GM12878 (cell line): ENCODE measurements at regions of chr14 and their contacts with region 1.

Region 1: DNA sequence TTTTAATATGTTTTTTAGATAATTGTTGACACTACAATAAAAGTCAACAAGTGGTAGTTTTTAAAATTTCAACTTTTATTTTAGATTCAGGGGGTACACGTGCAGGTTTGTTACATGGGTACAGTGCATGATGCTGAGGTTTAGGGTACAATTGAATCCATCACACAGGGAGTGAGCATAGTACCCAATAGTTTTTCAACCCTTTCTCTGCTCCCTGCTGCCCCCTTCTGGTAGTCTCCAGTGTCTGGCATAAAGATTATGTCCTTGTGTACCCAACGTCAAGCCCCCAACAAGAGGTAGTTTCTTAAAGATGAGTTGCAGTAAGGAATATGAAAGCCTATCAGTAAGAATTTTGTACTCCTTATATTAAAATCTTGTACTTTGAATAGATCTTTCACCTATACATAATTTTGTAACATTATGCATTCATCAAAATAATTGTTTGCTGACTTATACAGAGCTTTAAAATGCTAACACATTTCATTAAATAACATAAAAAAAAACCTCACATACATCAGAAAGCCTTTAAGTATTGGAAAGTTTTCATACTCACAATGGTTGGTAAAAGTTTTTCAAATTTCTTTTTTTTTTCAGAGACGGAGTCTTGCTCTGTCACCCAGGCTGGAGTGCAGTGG is 5.4 kb upstream of the RALGAPA1 start:
- DNase-seq: no peak
- ATAC-seq: peak; percentile 96
- H3K4me3 ChIP-seq: no peak overlapping the region
- H3K27ac ChIP-seq: no peak overlapping the region
- H3K4me1 ChIP-seq: no peaks in the 10 kb centered on the region
- H3K27me3 ChIP-seq: no peaks in the 10 kb centered on the region
- CTCF ChIP-seq: peak; percentile 62 to 87 (median 73)
- EP300 ChIP-seq: no peak
- POLR2A ChIP-seq: no peak
- RAD21 ChIP-seq: peak; percentile 58

Region 2: GRCh38 chr14:35423621-35424020 is 390.9 kb before region 1 on chr14:
- CTCF ChIA-PET with region 1: interaction called, 6 read pairs
- POLR2A ChIA-PET with region 1: no interaction called
- RAD21 ChIA-PET with region 1: no interaction called
- SMC1A ChIA-PET with region 1: interaction called, 3 read pairs
- in situ Hi-C with region 1: no loop called
- intact Hi-C with region 1: loop called (anchors 2 kb)
- DNase-seq: no peak
- ATAC-seq: no peak
- H3K4me3 ChIP-seq: no peak overlapping the region
- H3K27ac ChIP-seq: no peak overlapping the region
- H3K4me1 ChIP-seq: no peaks in the 10 kb centered on the region
- H3K27me3 ChIP-seq: no peaks in the 10 kb centered on the region
- CTCF ChIP-seq: no peak
- EP300 ChIP-seq: no peak
- POLR2A ChIP-seq: no peak
- RAD21 ChIP-seq: no peak

Region 3: GRCh38 chr14:35438910-35439713 is 375.4 kb before region 1 on chr14:
- CTCF ChIA-PET with region 1: interaction called, 11 read pairs
- POLR2A ChIA-PET with region 1: no interaction called
- RAD21 ChIA-PET with region 1: interaction called, 7 read pairs
- SMC1A ChIA-PET with region 1: interaction called, 7 read pairs
- in situ Hi-C with region 1: no loop called
- intact Hi-C with region 1: no loop called
- DNase-seq: peak; percentile 39
- ATAC-seq: peak; percentile 76
- H3K4me3 ChIP-seq: no peak overlapping the region
- H3K27ac ChIP-seq: no peak overlapping the region
- H3K4me1 ChIP-seq: no peaks in the 10 kb centered on the region
- H3K27me3 ChIP-seq: no peaks in the 10 kb centered on the region
- CTCF ChIP-seq: peak; percentile 45 to 62 (median 54); a peak in 5 of 6 replicates
- EP300 ChIP-seq: no peak; a peak in 1 of 4 replicates
- POLR2A ChIP-seq: no peak
- RAD21 ChIP-seq: peak; percentile 53

Region 4: DNA sequence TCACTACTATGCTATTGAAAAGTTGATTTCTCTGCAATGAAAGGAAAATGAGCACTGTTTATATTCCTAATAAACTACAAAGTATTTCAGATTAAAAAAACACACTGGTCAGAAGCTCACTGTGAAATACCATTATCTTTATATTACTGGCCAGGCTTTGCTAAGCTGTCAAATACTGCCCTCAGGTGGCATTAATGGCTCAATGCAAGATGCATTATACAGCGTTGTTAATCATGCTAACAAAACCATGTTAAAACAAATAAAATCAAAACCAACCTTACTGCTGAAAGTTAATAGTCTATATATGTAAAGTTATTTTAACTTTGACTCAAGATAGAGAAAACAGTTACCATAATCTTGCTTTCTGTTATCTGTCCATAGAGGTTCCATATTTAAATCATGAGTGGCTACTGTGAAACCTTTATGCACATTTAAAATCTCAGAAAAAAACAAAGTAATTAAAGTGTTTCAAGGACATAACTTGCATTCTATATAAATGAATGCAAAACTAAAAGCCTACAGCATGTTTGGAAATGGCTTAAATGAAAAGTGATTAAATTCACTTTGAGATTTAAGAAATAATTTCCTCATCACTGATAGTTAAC is 127.1 kb before region 1 on chr14:
- CTCF ChIA-PET with region 1: interaction called, 10 read pairs
- POLR2A ChIA-PET with region 1: no interaction called
- RAD21 ChIA-PET with region 1: no interaction called
- SMC1A ChIA-PET with region 1: interaction called, 3 read pairs
- in situ Hi-C with region 1: no loop called
- intact Hi-C with region 1: loop called (anchors 5 kb)
- DNase-seq: peak; percentile 2
- ATAC-seq: peak; percentile 90
- H3K4me3 ChIP-seq: no peak overlapping the region
- H3K27ac ChIP-seq: no peak overlapping the region
- H3K4me1 ChIP-seq: peaks cover 15% of the 10 kb centered on the region; the same call in 1 of the 2 replicates
- H3K27me3 ChIP-seq: no peaks in the 10 kb centered on the region
- CTCF ChIP-seq: peak; percentile 71 to 89 (median 89)
- EP300 ChIP-seq: no peak
- POLR2A ChIP-seq: no peak
- RAD21 ChIP-seq: peak; percentile 99

Region 5: GRCh38 chr14:35826218-35826951 is 11.9 kb after region 1 on chr14 and contains the start of gene BRMS1L:
- CTCF ChIA-PET with region 1: interaction called, 56 read pairs
- POLR2A ChIA-PET with region 1: interaction called, 7 read pairs
- RAD21 ChIA-PET with region 1: interaction called, 4 read pairs
- SMC1A ChIA-PET with region 1: interaction called, 4 read pairs
- in situ Hi-C with region 1: no loop called
- intact Hi-C with region 1: loop called (anchors 2 kb)
- DNase-seq: peak; percentile 97
- ATAC-seq: peak; percentile 97
- H3K4me3 ChIP-seq: peak within 1 kb of the TSS; percentile 96
- H3K27ac ChIP-seq: peak within 1 kb of the TSS; percentile 84
- H3K4me1 ChIP-seq: no peaks in the 10 kb centered on the region
- H3K27me3 ChIP-seq: no peaks in the 10 kb centered on the region
- CTCF ChIP-seq: no peak
- EP300 ChIP-seq: no peak; a peak in 1 of 4 replicates
- POLR2A ChIP-seq: peak; percentile 86
- RAD21 ChIP-seq: no peak
- polyA plus RNA-seq, gene BRMS1L: 7.6 to 8.0 TPM

Region 6: GRCh38 chr14:35835208-35835982 is 20.9 kb after region 1 on chr14:
- CTCF ChIA-PET with region 1: interaction called, 15 read pairs
- POLR2A ChIA-PET with region 1: interaction called, 3 read pairs
- RAD21 ChIA-PET with region 1: no interaction called
- SMC1A ChIA-PET with region 1: interaction called, 5 read pairs
- in situ Hi-C with region 1: no loop called
- intact Hi-C with region 1: no loop called
- DNase-seq: no peak
- ATAC-seq: no peak
- H3K4me3 ChIP-seq: no peak overlapping the region
- H3K27ac ChIP-seq: no peak overlapping the region
- H3K4me1 ChIP-seq: no peaks in the 10 kb centered on the region
- H3K27me3 ChIP-seq: no peaks in the 10 kb centered on the region
- CTCF ChIP-seq: no peak
- EP300 ChIP-seq: no peak
- POLR2A ChIP-seq: no peak
- RAD21 ChIP-seq: no peak

Region 7: DNA sequence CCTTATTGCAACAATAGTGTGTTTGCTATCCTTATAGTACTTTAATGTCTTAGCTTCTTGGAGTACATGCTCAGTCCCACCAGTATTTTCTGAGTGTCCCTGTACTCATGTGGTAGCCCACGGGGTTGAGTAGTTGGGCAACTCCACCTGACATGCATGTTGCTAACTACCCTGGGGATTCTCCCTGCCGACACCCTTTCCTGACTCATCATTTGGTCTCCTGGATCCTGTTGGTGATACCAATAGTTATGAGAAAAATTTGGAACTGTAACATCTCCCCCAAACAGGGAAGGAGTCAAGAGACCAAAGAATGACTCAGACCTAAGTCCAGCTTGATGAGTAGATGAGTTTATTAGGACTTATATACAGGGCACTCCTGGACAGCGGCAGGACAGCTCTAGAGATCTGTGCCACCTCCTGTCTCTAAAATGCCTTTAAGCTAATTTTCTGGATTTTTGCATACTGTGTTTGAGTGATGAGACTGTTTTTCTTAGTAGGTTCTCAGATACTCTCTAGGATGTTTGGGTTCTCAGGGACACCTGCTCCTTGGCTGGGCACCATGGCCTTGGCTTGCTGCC is 113.3 kb after region 1 on chr14:
- CTCF ChIA-PET with region 1: no interaction called
- POLR2A ChIA-PET with region 1: no interaction called
- RAD21 ChIA-PET with region 1: no interaction called
- SMC1A ChIA-PET with region 1: no interaction called
- in situ Hi-C with region 1: no loop called
- intact Hi-C with region 1: no loop called
- DNase-seq: no peak
- ATAC-seq: no peak
- H3K4me3 ChIP-seq: no peak overlapping the region
- H3K27ac ChIP-seq: no peak overlapping the region
- H3K4me1 ChIP-seq: peaks cover 8% of the 10 kb centered on the region; the same call in 1 of the 2 replicates
- H3K27me3 ChIP-seq: no peaks in the 10 kb centered on the region
- CTCF ChIP-seq: no peak
- EP300 ChIP-seq: no peak
- POLR2A ChIP-seq: no peak
- RAD21 ChIP-seq: no peak